ENCODE measurements at regions of chr5 and their contacts with region 1.

Region 1: GRCh38 chr5:139422307-139422893 is 16.9 kb downstream of the DNAJC18 start:
- DNase-seq: peak; percentile 89

Region 2: DNA sequence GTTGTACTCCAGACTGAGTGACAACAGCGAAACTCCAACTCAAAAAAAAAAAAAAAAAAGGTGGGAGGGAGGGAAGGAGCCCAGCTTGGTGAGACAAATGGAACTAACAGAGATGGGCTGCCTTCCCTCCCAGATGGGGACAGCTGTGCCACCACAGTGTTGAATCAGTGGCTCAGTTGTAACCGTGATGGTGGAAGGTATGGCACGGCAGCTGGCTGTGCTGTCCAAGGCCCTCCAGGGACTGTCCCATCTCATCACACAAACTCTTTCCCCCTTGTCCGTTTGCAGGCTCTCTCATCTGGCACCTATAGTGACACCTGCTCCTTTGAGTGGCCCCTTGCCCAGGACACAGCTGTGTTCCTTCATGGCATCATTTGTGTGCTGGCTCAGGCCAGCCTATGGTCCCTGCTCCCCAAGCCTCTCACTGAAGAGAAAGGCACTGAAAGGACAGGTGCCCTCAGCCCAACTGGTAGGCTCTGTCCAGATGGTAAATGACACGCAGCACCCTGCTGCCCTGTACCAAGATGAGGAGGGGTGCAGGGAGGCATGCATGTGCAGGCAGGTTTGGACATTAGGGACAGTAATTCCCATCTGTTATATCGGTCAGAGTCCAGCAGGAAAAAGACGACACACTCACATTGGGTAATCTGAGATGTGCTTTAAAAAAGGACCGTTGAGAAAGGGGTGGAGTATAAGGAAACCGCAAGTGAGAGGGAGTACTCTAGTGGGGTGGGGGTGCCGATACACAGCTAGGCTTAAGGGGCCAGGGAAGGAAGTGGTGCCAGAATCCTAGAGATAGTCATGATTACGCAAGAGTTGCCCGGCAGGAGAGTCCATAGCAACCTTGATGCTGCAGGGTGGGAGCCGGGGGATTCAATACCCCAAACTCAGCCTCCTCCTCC is 52.7 kb after region 1 on chr5:
- in situ Hi-C with region 1: loop called (anchors 10 kb)
- DNase-seq: peak; percentile 97

Region 3: GRCh38 chr5:139745800-139746690 is 323.6 kb after region 1 on chr5:
- in situ Hi-C with region 1: no loop called
- DNase-seq: no peak